ENCODE measurements at regions of chr13 and their contacts with region 1.

Region 1: GRCh38 chr13:37640499-37640898 is 41.9 kb upstream of the POSTN start:
- DNase-seq: peak; percentile 53
- H3K4me3 Mint-ChIP-seq: no peak overlapping the region
- H3K27ac Mint-ChIP-seq: no peak overlapping the region
- H3K4me1 Mint-ChIP-seq: no peaks in the 10 kb centered on the region
- H3K27me3 Mint-ChIP-seq: no peaks in the 10 kb centered on the region
- CTCF ChIP-seq: peak; percentile 59

Region 2: DNA sequence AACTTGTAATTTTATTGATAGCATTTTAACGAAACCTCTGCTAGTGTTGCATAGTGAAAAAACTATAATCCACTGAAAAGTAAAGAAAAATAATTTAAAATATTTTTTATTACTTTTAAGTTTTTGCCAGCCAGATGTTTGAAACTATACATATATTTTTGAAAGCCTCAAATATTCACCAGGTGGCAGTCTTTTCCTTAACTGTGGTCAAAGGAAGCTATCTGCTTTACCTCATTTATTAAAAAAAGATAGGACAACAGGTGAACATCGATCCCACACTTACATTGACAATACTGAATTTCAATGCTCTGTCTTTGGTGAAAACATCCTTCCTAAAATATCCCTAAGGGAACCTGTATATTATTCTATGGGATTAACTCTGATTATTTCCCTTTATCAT is 128.6 kb after region 1 on chr13:
- CTCF ChIA-PET with region 1: no interaction called
- POLR2A ChIA-PET with region 1: no interaction called
- intact Hi-C with region 1: loop called (anchors 5 kb)
- DNase-seq: peak; percentile 23
- H3K4me3 Mint-ChIP-seq: no peak overlapping the region
- H3K27ac Mint-ChIP-seq: no peak overlapping the region
- H3K4me1 Mint-ChIP-seq: no peaks in the 10 kb centered on the region
- H3K27me3 Mint-ChIP-seq: peaks cover 13% of the 10 kb centered on the region
- CTCF ChIP-seq: peak; percentile 25

Region 3: GRCh38 chr13:38045307-38046048 is 405.0 kb after region 1 on chr13:
- CTCF ChIA-PET with region 1: interaction called, 3 read pairs
- POLR2A ChIA-PET with region 1: no interaction called
- intact Hi-C with region 1: loop called (anchors 1 kb)
- DNase-seq: peak; percentile 56
- H3K4me3 Mint-ChIP-seq: no peak overlapping the region
- H3K27ac Mint-ChIP-seq: peak overlapping the region; percentile 44
- H3K4me1 Mint-ChIP-seq: no peaks in the 10 kb centered on the region
- H3K27me3 Mint-ChIP-seq: no peaks in the 10 kb centered on the region
- CTCF ChIP-seq: peak; percentile 45

Region 4: DNA sequence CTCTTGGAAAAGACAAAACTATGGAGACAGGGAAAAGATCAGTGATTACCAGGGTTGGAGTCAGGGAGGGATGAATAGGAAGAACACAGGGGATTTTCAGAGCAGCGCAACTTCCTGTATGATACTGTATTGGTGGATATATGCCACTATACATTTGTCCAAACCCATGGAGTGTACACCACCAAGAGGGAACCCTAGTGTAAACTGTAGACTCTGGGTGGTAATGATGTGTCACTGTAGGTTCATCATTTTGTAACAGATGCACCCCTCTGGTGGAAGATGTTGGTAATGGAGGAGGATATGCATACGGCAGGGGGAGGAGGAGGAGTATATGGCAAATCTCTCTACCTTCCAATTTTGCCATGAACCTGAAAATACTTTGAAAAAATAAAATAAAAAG is 777.2 kb after region 1 on chr13:
- CTCF ChIA-PET with region 1: no interaction called
- POLR2A ChIA-PET with region 1: no interaction called
- intact Hi-C with region 1: loop called (anchors 10 kb)
- DNase-seq: peak; percentile 53
- H3K4me3 Mint-ChIP-seq: no peak overlapping the region
- H3K27ac Mint-ChIP-seq: no peak overlapping the region
- H3K4me1 Mint-ChIP-seq: no peaks in the 10 kb centered on the region
- H3K27me3 Mint-ChIP-seq: no peaks in the 10 kb centered on the region
- CTCF ChIP-seq: peak; percentile 32

Region 5: GRCh38 chr13:38530492-38530891 is 890.0 kb after region 1 on chr13:
- CTCF ChIA-PET with region 1: interaction called, 4 read pairs
- POLR2A ChIA-PET with region 1: no interaction called
- intact Hi-C with region 1: loop called (anchors 1 kb)
- DNase-seq: peak; percentile 33
- H3K4me3 Mint-ChIP-seq: no peak overlapping the region
- H3K27ac Mint-ChIP-seq: no peak overlapping the region
- H3K4me1 Mint-ChIP-seq: no peaks in the 10 kb centered on the region
- H3K27me3 Mint-ChIP-seq: peaks cover 29% of the 10 kb centered on the region
- CTCF ChIP-seq: peak; percentile 42

Region 6: DNA sequence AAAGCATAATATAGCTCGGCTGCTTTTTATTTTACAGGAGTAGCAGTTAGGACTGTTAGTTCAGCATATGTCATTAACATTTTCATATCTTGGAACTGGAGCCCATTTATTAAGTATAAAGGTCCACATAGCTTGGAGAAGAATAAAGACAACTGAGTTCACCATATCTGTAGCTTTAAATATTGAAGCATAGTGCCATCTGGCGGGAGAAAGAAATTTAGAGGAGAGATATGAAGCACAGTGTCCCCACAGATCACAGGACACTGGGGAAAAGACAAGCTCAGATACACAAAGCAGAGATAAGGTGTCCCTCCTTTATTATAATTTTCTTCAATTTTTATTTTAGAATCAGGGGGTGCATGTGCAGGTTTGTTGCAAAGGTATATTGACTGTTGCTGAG is 941.6 kb after region 1 on chr13:
- CTCF ChIA-PET with region 1: interaction called, 4 read pairs
- POLR2A ChIA-PET with region 1: no interaction called
- intact Hi-C with region 1: loop called (anchors 1 kb)
- DNase-seq: peak; percentile 61
- H3K4me3 Mint-ChIP-seq: no peak overlapping the region
- H3K27ac Mint-ChIP-seq: no peak overlapping the region
- H3K4me1 Mint-ChIP-seq: no peaks in the 10 kb centered on the region
- H3K27me3 Mint-ChIP-seq: peaks cover 17% of the 10 kb centered on the region
- CTCF ChIP-seq: peak; percentile 32

Measured in MCF 10A (cell line).